K562 (cell line): ENCODE measurements at regions of chr5 and their contacts with region 1.

Region 1: GRCh38 chr5:15003511-15003920 is 131.9 kb upstream of the ANKH start:
- DNase-seq: peak; percentile 68 to 80 (median 74)
- ATAC-seq: peak; percentile 98
- H3K4me3 ChIP-seq: no peak overlapping the region
- H3K27ac ChIP-seq: no peak overlapping the region
- H3K4me1 ChIP-seq: no peaks in the 10 kb centered on the region
- H3K27me3 ChIP-seq: peaks cover 0 to 4% of the 10 kb centered on the region in 2 experiments; a peak in 1 of 5 replicates
- CTCF ChIP-seq: peak; percentile 74 to 91 (median 81)
- EP300 ChIP-seq: no peak
- POLR2A ChIP-seq: no peak
- RAD21 ChIP-seq: peak; percentile 86 to 91

Region 2: DNA sequence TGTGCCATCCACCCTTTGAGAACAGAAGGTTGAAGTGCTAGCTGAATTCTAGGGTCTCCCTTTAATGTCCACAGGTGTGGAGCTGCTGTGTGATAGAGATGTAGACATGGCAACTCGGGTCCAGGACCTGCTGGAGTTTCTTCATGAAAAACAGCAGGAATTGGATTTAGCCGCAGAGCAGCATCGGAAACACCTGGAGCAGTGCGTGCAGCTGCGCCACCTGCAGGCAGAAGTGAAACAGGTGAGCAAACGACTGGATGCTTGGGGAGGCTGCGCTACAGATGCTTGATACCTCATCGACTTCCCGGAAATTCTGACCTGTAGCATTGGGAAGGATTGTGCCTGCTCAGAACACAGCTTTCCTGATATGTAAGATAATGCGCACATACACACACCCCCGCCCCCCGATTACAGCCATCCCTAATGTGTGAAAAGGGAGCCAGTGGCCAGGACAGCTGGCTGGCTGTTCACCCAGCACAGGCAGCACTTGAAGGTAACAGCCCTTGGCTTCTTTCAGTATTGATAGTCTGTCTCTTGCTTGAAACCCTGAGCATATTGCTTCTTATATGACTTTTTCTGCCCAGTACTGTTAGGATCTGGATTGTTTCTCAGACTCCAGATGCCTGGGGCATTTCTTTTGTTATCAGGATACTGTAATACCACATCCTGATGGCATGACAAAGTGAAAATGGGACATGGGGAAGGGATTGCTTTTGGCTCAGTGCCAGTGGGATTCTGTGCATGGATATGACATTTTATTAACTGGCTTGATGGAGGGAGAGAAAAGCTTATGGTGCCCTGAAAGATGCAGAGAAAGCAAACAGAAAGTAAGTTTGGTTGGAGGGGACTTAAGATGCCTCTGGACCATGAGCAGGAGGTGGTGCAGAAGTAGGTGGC is 638.7 kb before region 1 on chr5:
- CTCF ChIA-PET with region 1: no interaction called
- POLR2A ChIA-PET with region 1: no interaction called
- in situ Hi-C with region 1: loop called (anchors 10 kb)
- intact Hi-C with region 1: loop called (anchors 5 kb)
- DNase-seq: peak; percentile 32 to 62 (median 57)
- ATAC-seq: peak; percentile 87
- H3K4me3 ChIP-seq: no peak overlapping the region
- H3K27ac ChIP-seq: no peak overlapping the region
- H3K4me1 ChIP-seq: no peaks in the 10 kb centered on the region
- H3K27me3 ChIP-seq: peaks cover 1 to 28% of the 10 kb centered on the region in 2 experiments; a peak in 4 of 5 replicates
- CTCF ChIP-seq: peak; percentile 71 to 87 (median 72)
- EP300 ChIP-seq: no peak
- POLR2A ChIP-seq: no peak
- RAD21 ChIP-seq: peak; percentile 3 to 53; a peak in 2 of 4 replicates

Region 3: GRCh38 chr5:14685757-14686156 is 317.8 kb before region 1 on chr5:
- CTCF ChIA-PET with region 1: interaction called, 11 read pairs
- POLR2A ChIA-PET with region 1: no interaction called
- in situ Hi-C with region 1: no loop called
- intact Hi-C with region 1: loop called (anchors 1 kb)
- DNase-seq: peak in 2 of 4 experiments; percentile 38 to 47
- ATAC-seq: peak; percentile 80
- H3K4me3 ChIP-seq: no peak overlapping the region
- H3K27ac ChIP-seq: no peak overlapping the region
- H3K4me1 ChIP-seq: no peaks in the 10 kb centered on the region
- H3K27me3 ChIP-seq: no peaks in the 10 kb centered on the region
- CTCF ChIP-seq: peak; percentile 53 to 75 (median 71); a peak in 5 of 6 replicates
- EP300 ChIP-seq: no peak
- POLR2A ChIP-seq: no peak
- RAD21 ChIP-seq: peak; percentile 71 to 76

Region 4: DNA sequence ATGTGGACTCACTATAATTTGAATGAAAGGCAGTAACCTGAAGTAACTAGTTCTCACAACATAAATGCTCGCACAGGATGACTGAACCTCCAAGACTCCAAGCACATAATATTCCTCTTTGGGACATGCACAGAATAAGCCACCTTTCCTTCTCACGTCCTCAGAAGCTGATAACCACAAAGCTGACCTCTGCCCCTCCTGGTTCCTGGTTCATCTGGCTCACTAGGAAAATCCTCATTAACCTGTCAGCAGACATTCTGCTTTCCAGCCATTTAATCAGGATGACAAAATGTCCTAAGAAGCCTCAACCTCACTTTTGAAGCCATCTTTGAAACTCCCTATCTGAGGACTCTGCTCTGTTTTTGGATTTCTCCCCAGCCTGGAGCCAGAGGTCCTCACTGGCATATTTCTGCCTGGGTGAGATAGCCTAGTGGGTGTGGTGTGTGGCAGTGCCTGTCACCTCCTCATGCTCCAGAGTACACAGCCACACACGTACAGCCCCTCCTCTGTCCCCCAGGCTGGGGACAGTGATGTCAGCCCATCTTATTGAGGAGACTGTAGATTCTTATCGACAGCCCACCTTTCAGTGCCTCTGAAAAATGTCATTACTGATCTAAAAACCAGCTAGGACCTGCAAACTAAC is 142.3 kb before region 1 on chr5:
- CTCF ChIA-PET with region 1: no interaction called
- POLR2A ChIA-PET with region 1: no interaction called
- in situ Hi-C with region 1: no loop called
- intact Hi-C with region 1: no loop called
- DNase-seq: no peak
- ATAC-seq: no peak; the same call in 2 of the 3 replicates
- H3K4me3 ChIP-seq: no peak overlapping the region
- H3K27ac ChIP-seq: no peak overlapping the region
- H3K4me1 ChIP-seq: no peaks in the 10 kb centered on the region
- H3K27me3 ChIP-seq: peaks cover 5 to 7% of the 10 kb centered on the region in 2 experiments; a peak in 4 of 5 replicates
- CTCF ChIP-seq: no peak
- EP300 ChIP-seq: no peak
- POLR2A ChIP-seq: no peak
- RAD21 ChIP-seq: no peak

Region 5: DNA sequence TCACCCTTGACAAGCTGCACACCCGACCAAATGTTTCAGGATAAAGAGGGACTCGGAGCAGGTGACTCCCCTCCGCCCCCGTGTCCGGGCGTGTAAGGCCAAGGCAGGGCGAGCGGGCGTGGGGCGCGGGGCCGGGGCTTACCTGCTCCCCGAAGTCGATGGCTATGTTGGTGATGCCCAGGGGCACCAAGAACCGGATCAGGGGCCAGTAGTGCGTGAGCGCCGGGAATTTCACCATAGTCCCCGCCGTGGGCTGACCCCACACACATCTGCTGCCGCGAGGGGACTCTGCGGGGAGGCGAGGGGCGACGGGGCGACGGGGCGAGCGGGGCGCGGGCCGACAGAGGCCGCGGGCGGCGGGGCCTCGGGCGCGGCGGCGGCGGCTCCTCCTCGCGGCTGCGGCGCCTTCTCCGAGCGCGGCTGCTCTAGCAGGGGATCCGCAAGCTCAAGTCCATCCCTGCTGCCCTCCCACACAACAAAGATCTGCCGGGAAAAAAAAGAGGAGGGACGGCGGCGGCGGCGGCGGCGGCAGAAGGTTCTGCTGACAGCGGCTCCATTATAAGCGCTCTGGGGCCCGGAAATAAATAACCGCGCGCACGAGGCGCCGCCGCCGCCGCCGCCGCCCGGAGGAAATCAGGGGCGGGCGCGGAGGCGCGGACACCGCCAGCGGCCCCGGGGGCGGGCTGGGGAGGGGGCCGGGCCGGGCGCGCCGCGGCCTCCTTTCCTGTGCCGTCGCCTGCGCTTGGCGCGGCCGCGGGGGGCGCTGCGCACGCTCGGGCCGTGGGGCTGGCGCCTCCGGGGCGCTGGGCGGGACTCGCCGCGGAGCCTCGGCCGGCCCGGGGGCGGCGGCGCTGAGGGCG is 132.1 kb before region 1 on chr5 and contains the start of gene ANKH:
- CTCF ChIA-PET with region 1: no interaction called
- POLR2A ChIA-PET with region 1: no interaction called
- in situ Hi-C with region 1: no loop called
- intact Hi-C with region 1: loop called (anchors 10 kb)
- DNase-seq: peak; percentile 87 to 90 (median 89)
- ATAC-seq: peak; percentile 97
- H3K4me3 ChIP-seq: peak within 1 kb of the TSS; percentile 57
- H3K27ac ChIP-seq: no peak within 1 kb of the TSS
- H3K4me1 ChIP-seq: peaks cover 0 to 14% of the 10 kb centered on the region in 2 experiments; a peak in 3 of 5 replicates
- H3K27me3 ChIP-seq: peaks cover 13 to 19% of the 10 kb centered on the region in 2 experiments
- CTCF ChIP-seq: peak in 2 of 3 experiments; percentile 49 to 50; a peak in 4 of 6 replicates
- EP300 ChIP-seq: no peak
- POLR2A ChIP-seq: no peak
- RAD21 ChIP-seq: no peak
- polyA plus RNA-seq, gene ANKH: 0.79 to 0.99 TPM

Region 6: GRCh38 chr5:15168358-15168757 is 164.8 kb after region 1 on chr5:
- CTCF ChIA-PET with region 1: no interaction called
- POLR2A ChIA-PET with region 1: no interaction called
- in situ Hi-C with region 1: no loop called
- intact Hi-C with region 1: no loop called
- DNase-seq: no peak
- ATAC-seq: no peak
- H3K4me3 ChIP-seq: no peak overlapping the region
- H3K27ac ChIP-seq: no peak overlapping the region
- H3K4me1 ChIP-seq: no peaks in the 10 kb centered on the region
- H3K27me3 ChIP-seq: no peaks in the 10 kb centered on the region
- CTCF ChIP-seq: no peak
- EP300 ChIP-seq: no peak
- POLR2A ChIP-seq: no peak
- RAD21 ChIP-seq: no peak